Heart right ventricle (tissue), 16 donors: ENCODE measurements at regions of chr10 and their contacts with region 1.

Region 1: GRCh38 chr10:55091691-55092328 is 290.8 kb upstream of the PCDH15 start:
- DNase-seq: no peak
- ATAC-seq: no peak
- H3K4me3 ChIP-seq: no peak overlapping the region
- H3K27ac ChIP-seq: no peak overlapping the region
- H3K4me1 ChIP-seq: no peaks in the 10 kb centered on the region
- H3K27me3 ChIP-seq: no peaks in the 10 kb centered on the region
- CTCF ChIP-seq: peak; percentile 62 to 89 (median 74)

Region 2: DNA sequence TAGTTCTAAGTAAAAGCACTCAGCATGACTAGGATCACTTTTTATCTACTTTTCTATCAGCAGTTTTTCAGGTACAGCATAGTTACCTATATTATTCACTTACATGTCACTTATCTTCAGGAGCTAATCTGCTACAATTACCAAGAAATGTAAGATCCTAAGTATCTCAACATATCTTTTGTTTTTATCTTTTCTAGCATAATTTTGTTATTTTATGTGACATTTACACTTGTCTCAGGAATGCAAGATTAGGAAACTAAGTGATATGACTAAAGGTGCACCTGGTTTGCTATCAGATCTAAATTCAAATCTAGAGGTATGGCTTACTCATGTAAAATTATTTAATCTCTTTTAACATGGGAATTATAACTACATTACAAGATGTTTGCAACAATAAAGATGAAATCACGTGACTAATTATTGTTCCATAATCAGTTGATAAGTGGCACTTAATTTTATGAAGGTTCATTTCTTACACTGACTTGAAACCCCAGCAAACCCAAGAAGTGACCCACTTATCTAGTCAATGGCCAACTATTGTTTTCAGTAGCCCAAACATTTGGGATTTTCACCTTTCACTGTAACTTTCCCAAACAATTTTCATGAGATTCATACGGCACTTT is 99.5 kb after region 1 on chr10:
- intact Hi-C with region 1: no loop called
- DNase-seq: no peak
- ATAC-seq: no peak
- H3K4me3 ChIP-seq: no peak overlapping the region
- H3K27ac ChIP-seq: no peak overlapping the region
- H3K4me1 ChIP-seq: no peaks in the 10 kb centered on the region
- H3K27me3 ChIP-seq: no peaks in the 10 kb centered on the region
- CTCF ChIP-seq: no peak

Region 3: DNA sequence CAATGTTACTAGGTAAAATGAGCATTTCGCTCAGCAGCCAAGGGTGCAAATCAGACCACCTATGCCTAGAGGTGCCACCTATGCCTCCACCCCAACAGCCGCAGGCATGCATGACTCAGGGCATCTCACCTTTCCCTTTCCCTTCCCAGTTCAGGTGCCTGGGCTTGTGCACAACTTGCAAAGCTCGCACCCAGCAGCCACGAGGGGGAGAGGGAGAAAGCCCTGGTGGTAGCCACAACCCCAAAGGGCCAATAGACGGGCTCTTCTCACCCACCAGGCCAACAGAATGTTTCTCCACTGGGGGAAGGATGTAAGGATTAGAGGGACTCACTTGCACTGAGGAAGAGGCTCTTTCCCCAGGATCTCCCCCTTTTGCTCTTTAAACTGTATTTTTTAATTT is 171.5 kb after region 1 on chr10:
- intact Hi-C with region 1: loop called in 3 of 10 experiments (anchors 10 kb)
- DNase-seq: no peak
- ATAC-seq: no peak
- H3K4me3 ChIP-seq: no peak overlapping the region
- H3K27ac ChIP-seq: no peak overlapping the region
- H3K4me1 ChIP-seq: no peaks in the 10 kb centered on the region
- H3K27me3 ChIP-seq: no peaks in the 10 kb centered on the region
- CTCF ChIP-seq: no peak

Region 4: DNA sequence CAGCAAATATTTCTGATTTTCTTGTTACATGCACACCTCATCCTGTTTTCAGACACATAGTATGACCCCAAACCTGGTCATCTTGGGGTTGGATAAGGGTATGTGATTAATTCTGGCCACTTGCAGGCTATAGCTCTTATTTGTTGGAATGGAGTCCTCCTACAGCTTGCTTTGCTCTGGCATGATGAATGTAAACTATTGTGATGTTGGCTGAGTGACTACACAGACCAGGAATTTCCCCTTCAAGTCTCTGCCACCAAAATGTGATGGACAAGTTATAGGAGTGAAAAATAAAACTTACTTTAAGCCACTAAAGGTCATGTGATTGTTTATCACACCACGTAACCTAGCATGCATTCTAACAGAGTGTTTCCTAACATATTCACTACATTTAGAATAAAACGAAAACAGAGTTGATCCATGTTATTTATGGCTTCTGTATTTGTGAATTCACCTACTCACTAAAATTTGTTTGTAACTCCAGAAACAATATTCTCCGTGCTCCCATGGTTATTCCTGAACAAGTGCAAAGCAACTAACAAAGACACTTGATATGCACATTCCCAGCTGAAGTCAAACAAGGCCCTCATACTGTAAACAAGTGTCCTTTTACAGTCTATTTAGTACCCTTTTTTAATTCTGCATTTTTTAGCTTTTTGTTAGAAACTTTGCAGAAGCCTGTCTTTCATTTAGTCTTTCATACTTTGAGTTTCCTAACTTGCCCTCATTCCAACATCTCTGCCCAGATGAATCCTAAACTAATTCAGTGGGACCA is 308.5 kb after region 1 on chr10:
- intact Hi-C with region 1: loop called in 1 of 10 experiments (anchors 10 kb)
- DNase-seq: no peak
- ATAC-seq: no peak
- H3K4me3 ChIP-seq: no peak overlapping the region
- H3K27ac ChIP-seq: no peak overlapping the region
- H3K4me1 ChIP-seq: no peaks in the 10 kb centered on the region
- H3K27me3 ChIP-seq: no peaks in the 10 kb centered on the region
- CTCF ChIP-seq: no peak

Region 5: GRCh38 chr10:55410415-55410885 is 318.6 kb after region 1 on chr10:
- intact Hi-C with region 1: loop called in 2 of 10 experiments (anchors 10 kb)
- DNase-seq: peak; percentile 18 to 80
- ATAC-seq: peak; percentile 95 to 100 (median 99)
- H3K4me3 ChIP-seq: peak overlapping the region in 5 of 10 donors; percentile 4 to 26 (median 19)
- H3K27ac ChIP-seq: peak overlapping the region in 9 of 10 donors; percentile 6 to 75 (median 66)
- H3K4me1 ChIP-seq: peaks cover 0 to 18% (median 14%) of the 10 kb centered on the region in 9 donors
- H3K27me3 ChIP-seq: no peaks in the 10 kb centered on the region
- CTCF ChIP-seq: peak in 7 of 9 donors; percentile 39 to 68 (median 47)

Region 6: DNA sequence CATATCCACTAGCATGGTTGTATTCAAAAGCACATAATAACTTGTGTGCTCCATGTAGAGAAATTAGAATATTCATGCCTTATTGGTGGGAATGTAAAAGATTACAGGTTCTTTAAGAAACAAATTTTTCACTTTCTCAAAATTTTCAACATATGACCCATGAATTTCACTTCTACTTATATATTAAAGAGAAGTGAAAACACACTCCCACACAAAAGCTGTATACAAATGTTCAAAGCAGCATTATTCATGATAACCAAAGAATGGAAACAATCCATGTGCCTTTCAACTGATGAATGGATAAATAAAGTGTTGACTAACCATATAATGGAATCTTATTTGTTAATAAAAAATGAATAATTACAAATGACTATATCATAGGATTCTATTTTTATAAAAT is 403.7 kb after region 1 on chr10:
- intact Hi-C with region 1: loop called in 7 of 10 experiments (anchors 5 to 10 kb)
- DNase-seq: no peak
- ATAC-seq: no peak
- H3K4me3 ChIP-seq: no peak overlapping the region
- H3K27ac ChIP-seq: no peak overlapping the region
- H3K4me1 ChIP-seq: no peaks in the 10 kb centered on the region
- H3K27me3 ChIP-seq: no peaks in the 10 kb centered on the region
- CTCF ChIP-seq: no peak

Region 7: GRCh38 chr10:55500932-55501559 is 409.2 kb after region 1 on chr10:
- intact Hi-C with region 1: loop called in 7 of 10 experiments (anchors 5 to 10 kb)
- DNase-seq: peak in 1 of 2 donors; percentile 17
- ATAC-seq: no peak
- H3K4me3 ChIP-seq: no peak overlapping the region
- H3K27ac ChIP-seq: no peak overlapping the region
- H3K4me1 ChIP-seq: no peaks in the 10 kb centered on the region
- H3K27me3 ChIP-seq: no peaks in the 10 kb centered on the region
- CTCF ChIP-seq: peak; percentile 19 to 80 (median 64)